ENCODE measurements at regions of chr2 and their contacts with region 1.

Region 1: DNA sequence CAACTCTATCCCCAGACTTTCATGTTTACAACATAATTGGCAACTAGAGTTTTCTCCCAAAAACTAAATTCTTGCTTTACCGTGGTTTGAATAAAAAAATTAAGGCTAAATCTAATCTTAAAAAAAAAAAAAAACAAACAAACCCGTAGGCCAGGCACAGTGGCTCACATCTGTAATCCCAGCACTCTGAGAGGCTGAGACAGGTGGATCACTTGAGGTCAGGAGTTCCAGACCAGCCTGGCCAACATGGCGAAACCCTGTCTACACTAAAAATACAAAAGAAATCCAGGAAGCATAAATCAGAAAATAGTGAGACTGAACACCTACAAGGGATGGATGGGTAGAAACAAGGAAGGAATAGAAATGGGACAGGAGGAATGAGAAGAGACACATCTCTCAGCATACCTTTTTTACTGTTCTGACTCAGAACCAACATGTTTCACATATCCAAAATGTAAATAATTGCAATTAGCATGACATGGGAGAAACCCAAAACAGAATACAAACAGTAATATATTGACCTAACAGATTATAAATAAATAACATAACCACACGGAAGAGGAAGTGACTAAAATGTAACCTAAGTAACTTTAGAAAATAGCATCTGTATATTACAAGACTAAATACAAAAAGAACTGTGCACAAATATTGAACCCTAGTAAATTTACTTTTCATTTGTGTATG is 17.5 kb downstream of the MGAT4A start:
- DNase-seq: no peak
- H3K4me3 Mint-ChIP-seq: no peak overlapping the region
- H3K27ac Mint-ChIP-seq: no peak overlapping the region
- H3K4me1 Mint-ChIP-seq: peaks cover 65% of the 10 kb centered on the region
- H3K27me3 Mint-ChIP-seq: no peaks in the 10 kb centered on the region

Region 2: DNA sequence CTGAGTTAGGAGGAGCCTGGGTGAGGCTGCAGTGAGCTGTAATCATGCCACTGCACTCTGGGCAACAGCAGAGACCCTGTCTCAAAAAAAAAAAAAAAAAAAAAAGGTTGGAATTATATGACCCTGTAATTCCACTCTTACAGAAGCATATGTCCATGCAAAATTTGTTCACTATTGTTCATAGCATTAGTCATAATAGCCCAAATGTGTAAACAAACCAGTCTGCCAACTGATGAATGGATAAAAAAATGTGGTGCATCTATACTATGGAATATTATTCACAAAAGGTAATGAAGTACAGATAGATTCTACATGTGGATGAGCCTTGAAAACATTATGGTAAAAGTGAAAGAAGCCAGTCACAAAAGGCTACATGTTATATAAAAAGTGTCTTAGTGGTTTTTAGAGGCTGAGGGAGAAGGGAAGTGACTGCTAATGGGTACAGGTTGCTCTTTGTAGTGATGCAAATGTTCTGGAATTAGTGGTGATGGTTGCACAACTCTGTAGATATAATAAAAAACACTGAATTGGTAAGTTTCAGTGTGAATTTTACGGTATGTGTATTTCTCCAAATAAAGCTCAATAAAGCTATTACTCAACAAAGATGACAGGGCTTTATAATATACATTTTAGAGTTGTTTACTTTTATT is 114.6 kb before region 1 on chr2:
- intact Hi-C with region 1: no loop called
- DNase-seq: no peak
- H3K4me3 Mint-ChIP-seq: no peak overlapping the region
- H3K27ac Mint-ChIP-seq: peak overlapping the region; percentile 66
- H3K4me1 Mint-ChIP-seq: peaks cover 8% of the 10 kb centered on the region
- H3K27me3 Mint-ChIP-seq: no peaks in the 10 kb centered on the region

Region 3: DNA sequence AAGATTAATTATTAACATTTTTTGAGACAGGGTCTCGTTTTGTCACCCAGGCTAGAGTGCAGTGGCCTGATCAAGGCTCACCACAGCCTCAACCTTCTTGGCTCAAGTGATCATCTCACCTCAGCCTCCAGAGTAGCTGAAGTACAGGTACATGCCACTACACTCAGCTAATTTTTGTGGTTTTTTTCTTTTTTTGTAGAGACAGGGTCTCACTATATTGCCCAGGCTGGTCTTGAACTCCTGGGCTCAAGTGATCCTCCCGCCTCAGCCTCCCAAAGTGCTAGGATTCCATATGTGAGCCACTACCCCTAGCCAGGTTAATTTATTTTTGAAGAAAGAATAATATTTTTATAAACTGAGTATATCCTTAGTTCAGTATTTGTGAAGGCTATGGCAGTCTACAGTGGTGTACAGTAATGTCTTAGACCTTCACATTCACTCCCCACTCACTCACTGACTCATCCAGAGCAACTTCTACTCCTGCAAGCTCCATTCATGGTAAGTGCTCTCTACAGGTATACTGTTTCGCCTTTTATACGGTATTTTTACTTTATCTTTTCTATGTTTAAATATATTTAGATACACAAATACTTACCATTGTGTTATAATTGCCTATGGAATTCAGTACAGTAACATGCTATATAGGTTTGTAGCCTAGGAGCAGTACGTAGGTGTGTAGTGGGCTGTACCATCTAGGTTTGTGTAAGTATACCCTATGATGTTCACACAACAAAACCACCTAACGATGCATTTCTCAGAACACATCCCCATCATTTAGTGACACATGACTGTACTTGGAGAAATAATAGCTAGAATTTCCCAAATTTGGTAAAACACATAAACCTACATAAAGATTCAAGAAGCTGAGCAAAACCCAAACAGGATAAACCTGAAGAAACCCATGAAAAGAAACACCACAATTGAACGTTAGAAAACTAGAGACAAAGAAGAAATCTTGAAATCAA is 21.1 kb before region 1 on chr2:
- intact Hi-C with region 1: loop called (anchors 2 kb)
- DNase-seq: no peak
- H3K4me3 Mint-ChIP-seq: peak overlapping the region; percentile 53
- H3K27ac Mint-ChIP-seq: peak overlapping the region; percentile 83
- H3K4me1 Mint-ChIP-seq: peaks cover 59% of the 10 kb centered on the region
- H3K27me3 Mint-ChIP-seq: no peaks in the 10 kb centered on the region

Region 4: GRCh38 chr2:98822301-98823164 is 109.1 kb after region 1 on chr2:
- intact Hi-C with region 1: no loop called
- DNase-seq: peak; percentile 92
- H3K4me3 Mint-ChIP-seq: peak overlapping the region; percentile 74
- H3K27ac Mint-ChIP-seq: no peak overlapping the region
- H3K4me1 Mint-ChIP-seq: peaks cover 10% of the 10 kb centered on the region
- H3K27me3 Mint-ChIP-seq: peaks cover 5% of the 10 kb centered on the region